B cell (primary cell): ENCODE measurements at regions of chr1 and their contacts with region 1.

Region 1: DNA sequence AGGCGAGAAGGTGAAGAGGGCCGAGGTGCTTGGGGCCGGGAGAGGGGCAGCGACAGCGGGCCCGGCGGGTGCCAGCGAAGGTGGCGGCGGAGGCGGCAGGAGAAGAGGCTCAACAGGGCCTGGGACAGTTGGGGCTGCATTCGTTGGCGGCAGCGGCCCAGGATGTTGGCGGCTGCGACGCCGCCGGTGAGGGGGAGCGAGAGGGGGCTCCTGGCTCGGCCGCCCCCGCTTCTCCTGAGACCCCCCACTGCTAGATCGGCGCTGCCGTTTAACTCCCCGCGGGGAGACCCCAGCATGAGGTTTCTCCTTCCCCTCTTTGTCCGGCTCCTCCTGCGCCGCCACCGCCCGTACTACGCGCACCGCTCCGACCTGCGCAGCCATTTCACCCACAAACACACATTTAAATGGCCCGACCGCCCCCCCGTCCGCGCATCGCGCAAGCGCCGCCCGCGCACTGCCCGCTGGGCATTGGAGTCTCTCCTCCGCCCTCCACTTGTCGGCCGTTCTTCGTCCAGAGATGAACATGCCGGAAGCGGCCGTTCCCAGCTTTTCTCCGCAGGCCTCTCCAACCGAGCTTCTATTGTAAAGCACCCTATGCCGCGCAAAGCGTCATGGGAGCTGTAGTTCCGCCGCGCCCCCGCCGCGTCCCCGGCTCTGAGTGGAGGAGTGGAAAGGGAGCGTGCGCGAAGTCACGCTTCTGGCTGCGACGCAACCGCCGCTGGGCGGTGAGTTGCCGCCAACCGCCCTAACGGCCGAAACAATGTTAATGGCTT is at the start of gene RSBN1:
- DNase-seq: peak; percentile 99
- ATAC-seq: peak; percentile 94
- H3K4me3 ChIP-seq: peak within 1 kb of the TSS; percentile 78 to 91 (median 83)
- H3K4me3 Mint-ChIP-seq: peak within 1 kb of the TSS; percentile 98
- H3K27ac ChIP-seq: peak within 1 kb of the TSS; percentile 86 to 93
- H3K27ac Mint-ChIP-seq: peak within 1 kb of the TSS; percentile 98
- H3K4me1 ChIP-seq: peaks cover 27 to 28% of the 10 kb centered on the region in 2 donors
- H3K4me1 Mint-ChIP-seq: peaks cover 39% of the 10 kb centered on the region
- H3K27me3 ChIP-seq: no peaks in the 10 kb centered on the region
- H3K27me3 Mint-ChIP-seq: no peaks in the 10 kb centered on the region
- CTCF ChIP-seq: peak; percentile 2
- total RNA-seq, gene RSBN1: 40.2 and 41.5 TPM in 2 replicates

Region 2: GRCh38 chr1:113072757-113073478 is 739.2 kb before region 1 on chr1 and contains the start of gene LRIG2:
- CTCF ChIA-PET with region 1: no interaction called
- POLR2A ChIA-PET with region 1: no interaction called
- intact Hi-C with region 1: loop called (anchors 2 kb)
- DNase-seq: peak; percentile 97
- ATAC-seq: peak; percentile 96
- H3K4me3 ChIP-seq: peak within 1 kb of the TSS; percentile 74 to 94 (median 87)
- H3K4me3 Mint-ChIP-seq: peak within 1 kb of the TSS; percentile 99
- H3K27ac ChIP-seq: peak within 1 kb of the TSS; percentile 74 to 77
- H3K27ac Mint-ChIP-seq: peak within 1 kb of the TSS; percentile 97
- H3K4me1 ChIP-seq: peaks cover 15 to 18% of the 10 kb centered on the region in 2 donors
- H3K4me1 Mint-ChIP-seq: peaks cover 33% of the 10 kb centered on the region
- H3K27me3 ChIP-seq: no peaks in the 10 kb centered on the region
- H3K27me3 Mint-ChIP-seq: no peaks in the 10 kb centered on the region
- CTCF ChIP-seq: peak; percentile 95
- total RNA-seq, gene LRIG2: 30.6 and 32.2 TPM in 2 replicates

Region 3: GRCh38 chr1:113835642-113836307 is 23.7 kb after region 1 on chr1:
- CTCF ChIA-PET with region 1: interaction called, 5 read pairs
- POLR2A ChIA-PET with region 1: interaction called, 3 read pairs
- intact Hi-C with region 1: loop called (anchors 2 kb)
- DNase-seq: peak; percentile 72
- ATAC-seq: peak; percentile 28
- H3K4me3 ChIP-seq: no peak overlapping the region
- H3K4me3 Mint-ChIP-seq: no peak overlapping the region
- H3K27ac ChIP-seq: no peak overlapping the region
- H3K27ac Mint-ChIP-seq: no peak overlapping the region
- H3K4me1 ChIP-seq: no peaks in the 10 kb centered on the region
- H3K4me1 Mint-ChIP-seq: peaks cover 2% of the 10 kb centered on the region
- H3K27me3 ChIP-seq: no peaks in the 10 kb centered on the region
- H3K27me3 Mint-ChIP-seq: no peaks in the 10 kb centered on the region
- CTCF ChIP-seq: peak; percentile 86

Region 4: DNA sequence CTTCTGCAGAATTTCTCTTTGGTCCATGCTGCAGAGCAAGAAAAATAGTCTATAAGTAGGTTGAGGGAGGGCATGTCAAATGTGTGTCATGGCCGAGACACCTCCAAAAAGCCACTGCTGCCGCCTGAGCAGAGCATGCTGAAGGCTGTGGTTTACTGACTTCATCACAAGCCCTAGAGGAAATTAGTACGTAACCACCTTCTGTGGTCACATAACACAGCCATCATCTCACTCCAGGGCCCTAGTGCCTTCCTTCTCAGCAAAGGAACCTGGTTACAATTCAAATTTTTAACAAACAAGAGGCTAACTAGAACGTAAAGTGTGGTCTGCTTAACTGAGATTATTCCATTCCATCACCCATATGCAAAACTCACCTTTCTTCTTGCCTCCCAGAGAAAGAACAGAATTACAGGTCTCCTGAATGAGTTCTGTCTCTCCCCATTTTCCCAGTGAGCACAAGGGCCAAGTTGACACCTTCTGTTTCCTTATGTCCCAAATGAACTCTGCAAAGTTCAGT is 59.6 kb after region 1 on chr1 and contains the start of gene PTPN22:
- CTCF ChIA-PET with region 1: no interaction called
- POLR2A ChIA-PET with region 1: no interaction called
- intact Hi-C with region 1: loop called (anchors 1 kb)
- DNase-seq: peak; percentile 88
- ATAC-seq: peak; percentile 93
- H3K4me3 ChIP-seq: peak within 1 kb of the TSS; percentile 52 to 72 (median 66)
- H3K4me3 Mint-ChIP-seq: peak within 1 kb of the TSS; percentile 92
- H3K27ac ChIP-seq: peak within 1 kb of the TSS; percentile 84 to 91
- H3K27ac Mint-ChIP-seq: peak within 1 kb of the TSS; percentile 96
- H3K4me1 ChIP-seq: peaks cover 50 to 52% of the 10 kb centered on the region in 2 donors
- H3K4me1 Mint-ChIP-seq: peaks cover 67% of the 10 kb centered on the region
- H3K27me3 ChIP-seq: no peaks in the 10 kb centered on the region
- H3K27me3 Mint-ChIP-seq: no peaks in the 10 kb centered on the region
- CTCF ChIP-seq: no peak
- total RNA-seq, gene PTPN22: 34.4 and 37.4 TPM in 2 replicates

Region 5: GRCh38 chr1:113928941-113929749 is 117.1 kb after region 1 on chr1 and contains the start of gene HIPK1:
- CTCF ChIA-PET with region 1: interaction called, 7 read pairs
- POLR2A ChIA-PET with region 1: interaction called, 4 read pairs
- intact Hi-C with region 1: loop called (anchors 1 kb)
- DNase-seq: peak; percentile 96
- ATAC-seq: peak; percentile 75
- H3K4me3 ChIP-seq: peak within 1 kb of the TSS; percentile 76 to 92 (median 86)
- H3K4me3 Mint-ChIP-seq: peak within 1 kb of the TSS; percentile 100
- H3K27ac ChIP-seq: peak within 1 kb of the TSS; percentile 98 to 99
- H3K27ac Mint-ChIP-seq: peak within 1 kb of the TSS; percentile 100
- H3K4me1 ChIP-seq: peaks cover 33 to 35% of the 10 kb centered on the region in 2 donors
- H3K4me1 Mint-ChIP-seq: peaks cover 49% of the 10 kb centered on the region
- H3K27me3 ChIP-seq: no peaks in the 10 kb centered on the region
- H3K27me3 Mint-ChIP-seq: no peaks in the 10 kb centered on the region
- CTCF ChIP-seq: no peak
- total RNA-seq, gene HIPK1: 48.0 and 48.2 TPM in 2 replicates

Region 6: GRCh38 chr1:114716304-114717170 is 904.5 kb after region 1 on chr1 and contains the start of gene NRAS:
- CTCF ChIA-PET with region 1: no interaction called
- POLR2A ChIA-PET with region 1: no interaction called
- intact Hi-C with region 1: loop called (anchors 5 kb)
- DNase-seq: peak; percentile 96
- ATAC-seq: peak; percentile 96
- H3K4me3 ChIP-seq: peak within 1 kb of the TSS; percentile 69 to 95 (median 89)
- H3K4me3 Mint-ChIP-seq: peak within 1 kb of the TSS; percentile 99
- H3K27ac ChIP-seq: peak within 1 kb of the TSS; percentile 97
- H3K27ac Mint-ChIP-seq: peak within 1 kb of the TSS; percentile 99
- H3K4me1 ChIP-seq: peaks cover 15 to 16% of the 10 kb centered on the region in 2 donors
- H3K4me1 Mint-ChIP-seq: peaks cover 29% of the 10 kb centered on the region
- H3K27me3 ChIP-seq: no peaks in the 10 kb centered on the region
- H3K27me3 Mint-ChIP-seq: no peaks in the 10 kb centered on the region
- CTCF ChIP-seq: no peak
- total RNA-seq, gene NRAS: 35.0 and 35.3 TPM in 2 replicates